ENCODE measurements at regions of chr1 and their contacts with region 1.

Region 1: GRCh38 chr1:161165742-161166668 is at the start of gene PPOX:
- DNase-seq: peak; percentile 98
- ATAC-seq: peak; percentile 93
- H3K4me3 ChIP-seq: peak within 1 kb of the TSS; percentile 71 to 82
- H3K27ac ChIP-seq: peak within 1 kb of the TSS; percentile 65
- H3K4me1 ChIP-seq: peaks cover 3 to 31% of the 10 kb centered on the region in 2 experiments; a peak in 3 of 4 replicates
- H3K27me3 ChIP-seq: no peaks in the 10 kb centered on the region
- CTCF ChIP-seq: peak in 2 of 3 experiments; percentile 60 to 61; a peak in 4 of 6 replicates
- POLR2A ChIP-seq: peak; percentile 43
- RAD21 ChIP-seq: no peak
- total RNA-seq, gene PPOX: 24.2 TPM

Region 2: GRCh38 chr1:161132410-161133219 is 33.4 kb before region 1 on chr1 and contains the start of gene DEDD:
- CTCF ChIA-PET with region 1: interaction called, 7 read pairs
- POLR2A ChIA-PET with region 1: interaction called, 14 read pairs
- RAD21 ChIA-PET with region 1: no interaction called
- intact Hi-C with region 1: no loop called
- DNase-seq: peak; percentile 98
- ATAC-seq: peak; percentile 86
- H3K4me3 ChIP-seq: peak within 1 kb of the TSS; percentile 81 to 85
- H3K27ac ChIP-seq: peak within 1 kb of the TSS; percentile 91
- H3K4me1 ChIP-seq: peaks cover 10 to 20% of the 10 kb centered on the region in 2 experiments; a peak in 3 of 4 replicates
- H3K27me3 ChIP-seq: no peaks in the 10 kb centered on the region
- CTCF ChIP-seq: no peak
- POLR2A ChIP-seq: peak; percentile 31
- RAD21 ChIP-seq: no peak
- total RNA-seq, gene DEDD: 32.8 TPM

Region 3: DNA sequence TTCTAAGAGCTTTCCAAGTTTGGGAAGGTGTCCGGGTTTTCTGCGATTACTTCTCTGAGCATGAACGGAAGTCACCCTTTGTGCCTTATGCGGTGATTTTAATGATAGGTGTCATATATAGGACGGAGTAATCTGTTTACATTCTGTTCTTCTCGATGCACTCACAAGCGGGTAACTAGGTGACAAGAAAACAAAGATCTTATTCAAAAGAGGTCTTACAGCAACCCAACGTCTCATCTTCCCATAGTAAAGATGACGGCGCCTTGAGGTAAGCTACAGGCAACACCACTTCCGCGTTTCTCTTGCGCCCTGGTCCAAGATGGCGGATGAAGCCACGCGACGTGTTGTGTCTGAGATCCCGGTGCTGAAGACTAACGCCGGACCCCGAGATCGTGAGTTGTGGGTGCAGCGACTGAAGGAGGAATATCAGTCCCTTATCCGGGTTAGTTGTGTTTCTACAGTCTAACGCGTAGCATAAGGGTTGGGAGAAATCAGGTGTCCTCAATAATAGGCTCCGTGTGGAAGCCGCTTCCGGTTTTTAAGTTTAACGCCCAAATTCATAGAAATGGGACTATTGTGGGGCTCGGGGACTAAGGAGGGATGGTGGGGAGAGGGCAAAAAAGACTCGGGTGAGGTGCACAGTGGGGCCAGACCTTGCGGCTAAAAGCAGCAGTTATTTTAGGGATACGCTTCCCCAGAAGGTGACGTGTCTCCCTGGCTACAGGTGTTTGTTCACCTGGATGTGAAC is 12.2 kb before region 1 on chr1 and contains the start of gene UFC1:
- CTCF ChIA-PET with region 1: interaction called, 10 read pairs
- POLR2A ChIA-PET with region 1: interaction called, 24 read pairs
- RAD21 ChIA-PET with region 1: no interaction called
- intact Hi-C with region 1: no loop called
- DNase-seq: peak; percentile 87
- ATAC-seq: peak; percentile 92
- H3K4me3 ChIP-seq: peak within 1 kb of the TSS; percentile 66 to 87
- H3K27ac ChIP-seq: peak within 1 kb of the TSS; percentile 99
- H3K4me1 ChIP-seq: peaks cover 5 to 20% of the 10 kb centered on the region in 2 experiments; a peak in 3 of 4 replicates
- H3K27me3 ChIP-seq: no peaks in the 10 kb centered on the region
- CTCF ChIP-seq: no peak
- POLR2A ChIP-seq: no peak
- RAD21 ChIP-seq: no peak
- total RNA-seq, gene UFC1: 63.7 TPM

Region 4: DNA sequence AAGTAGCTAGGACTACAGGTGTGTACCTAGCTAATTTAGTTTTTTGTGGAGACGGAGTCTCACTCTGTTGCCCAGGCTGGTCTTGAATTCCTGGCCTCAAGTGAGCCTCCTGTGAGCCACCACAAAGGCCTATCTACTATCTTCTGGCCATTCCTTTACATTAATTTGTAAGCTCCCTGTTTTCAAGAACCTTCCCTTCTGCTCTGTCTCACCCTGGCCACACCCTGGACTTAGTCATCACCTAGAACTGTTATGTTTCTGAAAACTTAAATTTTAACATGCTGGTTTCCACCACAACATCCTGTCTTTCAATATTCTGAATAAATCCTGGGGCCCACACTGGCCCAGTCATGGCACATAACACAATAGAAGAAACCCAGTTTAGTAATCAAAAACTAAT is 16.2 kb after region 1 on chr1:
- CTCF ChIA-PET with region 1: interaction called, 9 read pairs
- POLR2A ChIA-PET with region 1: interaction called, 13 read pairs
- RAD21 ChIA-PET with region 1: no interaction called
- intact Hi-C with region 1: no loop called
- DNase-seq: no peak
- ATAC-seq: no peak
- H3K4me3 ChIP-seq: peak overlapping the region in 1 of 2 experiments; percentile 4; a peak in 1 of 4 replicates
- H3K27ac ChIP-seq: no peak overlapping the region
- H3K4me1 ChIP-seq: peaks cover 19 to 34% of the 10 kb centered on the region in 2 experiments
- H3K27me3 ChIP-seq: no peaks in the 10 kb centered on the region
- CTCF ChIP-seq: no peak
- POLR2A ChIP-seq: no peak
- RAD21 ChIP-seq: no peak

Region 5: DNA sequence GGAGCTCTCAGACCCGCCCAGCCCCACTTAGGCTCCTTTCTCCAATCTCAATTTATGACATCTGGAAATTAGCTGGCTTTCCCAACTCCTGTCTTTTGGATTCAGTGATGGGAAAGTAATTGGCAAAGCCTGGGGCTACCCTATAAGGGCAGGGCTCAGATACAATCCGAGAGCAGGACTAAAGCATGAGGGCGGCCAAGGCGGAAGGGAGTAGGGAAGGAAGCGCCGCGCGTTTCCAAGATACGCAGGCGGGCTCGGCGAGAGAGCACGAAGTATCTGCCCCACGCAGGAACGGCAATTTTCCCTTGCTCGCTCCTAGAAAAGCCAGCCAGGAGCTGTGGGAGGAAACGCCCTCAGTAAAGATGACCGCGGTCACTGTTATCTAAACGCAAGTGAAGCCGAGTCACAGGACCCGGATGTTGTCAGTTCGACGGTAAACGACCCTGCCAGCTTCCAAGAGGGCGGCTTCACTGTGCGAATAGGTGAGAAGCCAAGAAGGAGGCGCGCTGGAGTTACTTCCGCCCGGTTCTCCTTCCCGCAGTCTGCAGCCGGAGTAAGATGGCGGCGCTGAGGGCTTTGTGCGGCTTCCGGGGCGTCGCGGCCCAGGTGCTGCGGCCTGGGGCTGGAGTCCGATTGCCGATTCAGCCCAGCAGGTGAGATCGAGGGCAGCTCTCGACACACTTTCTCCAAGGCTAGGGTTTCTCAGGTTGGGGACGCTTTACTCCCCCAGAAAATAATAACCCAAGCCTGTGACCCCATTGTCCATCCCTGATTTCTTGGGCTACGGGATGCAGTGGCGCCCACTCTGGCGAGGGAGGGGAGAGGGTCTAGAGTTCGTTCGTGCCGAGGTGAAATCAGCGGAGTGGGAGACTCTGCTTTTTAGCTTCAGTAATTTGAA is 36.1 kb after region 1 on chr1 and contains the start of gene NDUFS2:
- CTCF ChIA-PET with region 1: interaction called, 4 read pairs
- POLR2A ChIA-PET with region 1: interaction called, 12 read pairs
- RAD21 ChIA-PET with region 1: no interaction called
- intact Hi-C with region 1: no loop called
- DNase-seq: peak; percentile 99
- ATAC-seq: peak; percentile 96
- H3K4me3 ChIP-seq: peak within 1 kb of the TSS; percentile 94 to 98
- H3K27ac ChIP-seq: peak within 1 kb of the TSS; percentile 65
- H3K4me1 ChIP-seq: peaks cover 8 to 38% of the 10 kb centered on the region in 2 experiments; a peak in 3 of 4 replicates
- H3K27me3 ChIP-seq: no peaks in the 10 kb centered on the region
- CTCF ChIP-seq: peak in 2 of 3 experiments; percentile 31 to 32; a peak in 2 of 6 replicates
- POLR2A ChIP-seq: peak; percentile 76
- RAD21 ChIP-seq: no peak
- total RNA-seq, gene NDUFS2: 82.7 TPM

Region 6: GRCh38 chr1:161382214-161383019 is 216.4 kb after region 1 on chr1:
- CTCF ChIA-PET with region 1: interaction called, 10 read pairs
- POLR2A ChIA-PET with region 1: interaction called, 4 read pairs
- RAD21 ChIA-PET with region 1: no interaction called
- intact Hi-C with region 1: no loop called
- DNase-seq: peak; percentile 45
- ATAC-seq: peak; percentile 86
- H3K4me3 ChIP-seq: no peak overlapping the region
- H3K27ac ChIP-seq: no peak overlapping the region
- H3K4me1 ChIP-seq: peaks cover 5 to 14% of the 10 kb centered on the region in 2 experiments; a peak in 3 of 4 replicates
- H3K27me3 ChIP-seq: no peaks in the 10 kb centered on the region
- CTCF ChIP-seq: peak; percentile 56 to 85 (median 72)
- POLR2A ChIP-seq: no peak
- RAD21 ChIP-seq: peak; percentile 84

Measured in HCT116 (cell line).